Mammary epithelial cell (primary cell): ENCODE measurements at regions of chr10 and their contacts with region 1.

Region 1: DNA sequence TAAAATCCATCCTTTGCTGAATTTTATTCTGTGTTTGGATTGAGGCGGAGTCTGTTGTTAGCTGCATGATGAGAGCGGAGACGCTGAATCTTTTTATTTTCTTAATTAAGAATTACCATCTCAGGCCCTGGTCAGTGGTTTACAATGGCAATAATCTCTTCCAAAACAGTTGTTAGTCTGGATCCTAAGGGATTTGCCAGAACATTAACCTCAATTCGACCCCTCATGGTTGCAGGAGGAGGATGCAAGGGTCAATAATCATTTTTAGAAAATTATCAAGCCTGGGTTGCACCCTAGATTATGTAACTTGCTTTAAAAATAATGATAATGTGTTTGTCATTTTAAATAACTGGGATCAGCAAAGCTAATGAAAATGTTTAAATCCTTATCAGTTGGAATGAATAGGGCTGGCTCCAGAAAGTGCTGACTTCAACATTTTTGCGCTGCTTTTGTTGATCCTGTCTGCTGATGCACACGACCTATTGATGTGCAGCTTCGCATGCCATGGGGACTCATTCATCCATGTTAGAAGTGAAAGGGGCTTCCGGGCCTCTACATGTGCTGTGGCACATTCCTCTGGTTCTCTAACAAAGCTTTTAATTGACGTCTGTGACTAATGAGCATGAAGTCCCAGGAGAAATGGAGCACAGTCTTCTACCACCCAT is 80.7 kb upstream of the KIAA1217 start:
- DNase-seq: no peak
- H3K4me3 ChIP-seq: no peak overlapping the region
- H3K27ac ChIP-seq: no peak overlapping the region
- H3K4me1 ChIP-seq: no peaks in the 10 kb centered on the region
- H3K27me3 ChIP-seq: peaks cover 5% of the 10 kb centered on the region
- CTCF ChIP-seq: no peak

Region 2: DNA sequence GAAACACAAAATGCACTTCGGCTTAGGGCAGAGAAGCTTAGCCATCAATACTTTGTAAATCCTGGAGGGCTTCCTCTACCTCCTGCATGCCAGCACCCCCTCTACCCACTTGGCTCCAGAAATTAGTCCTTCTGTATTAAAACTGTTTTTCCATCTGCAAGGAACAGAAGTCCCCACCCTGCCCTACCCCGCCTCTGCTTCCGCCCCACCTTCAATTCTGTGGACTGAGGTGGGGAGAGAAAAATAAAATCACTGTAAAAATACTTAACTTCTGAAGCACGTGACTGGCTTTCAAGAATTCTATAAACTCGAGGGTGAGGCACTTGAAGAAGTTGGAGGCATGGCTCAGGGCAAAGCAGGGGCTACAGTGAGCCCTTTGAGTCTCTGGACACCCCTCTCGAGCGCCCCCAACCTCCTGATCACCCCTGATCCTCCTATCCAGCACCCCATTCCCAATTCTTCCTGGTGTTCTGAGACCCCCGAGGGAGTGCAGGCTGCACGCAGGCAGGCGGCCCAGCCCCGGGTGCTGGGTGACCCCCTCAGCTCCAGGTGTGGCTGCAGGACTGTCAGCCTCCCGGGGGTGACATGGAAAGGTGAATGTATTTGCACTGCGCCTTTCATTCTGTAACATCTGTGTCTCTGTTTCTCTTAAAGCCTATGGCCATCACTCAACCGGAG is 73.4 kb after region 1 on chr10:
- CTCF ChIA-PET with region 1: no interaction called
- dilution Hi-C with region 1: loop called (anchors 5 kb)
- in situ Hi-C with region 1: no loop called
- intact Hi-C with region 1: no loop called
- DNase-seq: no peak
- H3K4me3 ChIP-seq: no peak overlapping the region
- H3K27ac ChIP-seq: no peak overlapping the region
- H3K4me1 ChIP-seq: no peaks in the 10 kb centered on the region
- H3K27me3 ChIP-seq: no peaks in the 10 kb centered on the region
- CTCF ChIP-seq: no peak

Region 3: DNA sequence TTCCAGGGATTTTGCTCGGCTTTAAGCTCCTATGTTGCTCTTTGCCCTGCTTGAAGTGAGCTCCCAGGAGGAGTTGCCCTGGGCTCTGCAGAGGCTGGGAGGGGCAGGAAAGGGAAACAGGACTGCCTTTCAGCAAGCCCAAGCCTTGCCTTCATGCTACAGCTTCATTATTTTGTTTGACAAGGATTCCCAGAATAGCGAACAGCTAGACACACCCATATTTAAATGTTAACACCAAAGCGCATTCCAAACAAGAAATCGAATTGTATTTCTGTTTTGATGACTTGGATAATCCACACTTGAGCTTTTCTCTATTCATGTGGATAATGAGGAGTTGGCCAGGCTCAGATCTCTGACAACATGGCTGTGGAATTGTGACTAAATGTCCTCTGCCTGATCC is 87.0 kb after region 1 on chr10:
- CTCF ChIA-PET with region 1: no interaction called
- dilution Hi-C with region 1: no loop called
- in situ Hi-C with region 1: no loop called
- intact Hi-C with region 1: no loop called
- DNase-seq: no peak
- H3K4me3 ChIP-seq: no peak overlapping the region
- H3K27ac ChIP-seq: no peak overlapping the region
- H3K4me1 ChIP-seq: peaks cover 3% of the 10 kb centered on the region
- H3K27me3 ChIP-seq: no peaks in the 10 kb centered on the region
- CTCF ChIP-seq: no peak

Region 4: GRCh38 chr10:24262931-24263590 is 134.9 kb after region 1 on chr10:
- CTCF ChIA-PET with region 1: no interaction called
- dilution Hi-C with region 1: no loop called
- in situ Hi-C with region 1: no loop called
- intact Hi-C with region 1: no loop called
- DNase-seq: no peak
- H3K4me3 ChIP-seq: no peak overlapping the region
- H3K27ac ChIP-seq: no peak overlapping the region
- H3K4me1 ChIP-seq: peaks cover 15% of the 10 kb centered on the region
- H3K27me3 ChIP-seq: no peaks in the 10 kb centered on the region
- CTCF ChIP-seq: no peak